CD4-positive, alpha-beta T cell (primary cell): ENCODE measurements at regions of chr20 and their contacts with region 1.

Region 1: GRCh38 chr20:36773597-36774390 is at the start of gene DSN1:
- DNase-seq: peak; percentile 95 to 99 (median 98)
- ATAC-seq: peak; percentile 78
- H3K4me3 ChIP-seq: peak within 1 kb of the TSS; percentile 86
- H3K4me3 Mint-ChIP-seq: peak within 1 kb of the TSS; percentile 97
- H3K27ac ChIP-seq: peak within 1 kb of the TSS; percentile 83 to 91
- H3K27ac Mint-ChIP-seq: peak within 1 kb of the TSS; percentile 94
- H3K4me1 ChIP-seq: peaks cover 21% of the 10 kb centered on the region
- H3K4me1 Mint-ChIP-seq: peaks cover 21% of the 10 kb centered on the region
- H3K27me3 ChIP-seq: no peaks in the 10 kb centered on the region
- H3K27me3 Mint-ChIP-seq: no peaks in the 10 kb centered on the region
- CTCF ChIP-seq: no peak
- total RNA-seq, gene DSN1: 10.5 to 14.3 TPM

Region 2: DNA sequence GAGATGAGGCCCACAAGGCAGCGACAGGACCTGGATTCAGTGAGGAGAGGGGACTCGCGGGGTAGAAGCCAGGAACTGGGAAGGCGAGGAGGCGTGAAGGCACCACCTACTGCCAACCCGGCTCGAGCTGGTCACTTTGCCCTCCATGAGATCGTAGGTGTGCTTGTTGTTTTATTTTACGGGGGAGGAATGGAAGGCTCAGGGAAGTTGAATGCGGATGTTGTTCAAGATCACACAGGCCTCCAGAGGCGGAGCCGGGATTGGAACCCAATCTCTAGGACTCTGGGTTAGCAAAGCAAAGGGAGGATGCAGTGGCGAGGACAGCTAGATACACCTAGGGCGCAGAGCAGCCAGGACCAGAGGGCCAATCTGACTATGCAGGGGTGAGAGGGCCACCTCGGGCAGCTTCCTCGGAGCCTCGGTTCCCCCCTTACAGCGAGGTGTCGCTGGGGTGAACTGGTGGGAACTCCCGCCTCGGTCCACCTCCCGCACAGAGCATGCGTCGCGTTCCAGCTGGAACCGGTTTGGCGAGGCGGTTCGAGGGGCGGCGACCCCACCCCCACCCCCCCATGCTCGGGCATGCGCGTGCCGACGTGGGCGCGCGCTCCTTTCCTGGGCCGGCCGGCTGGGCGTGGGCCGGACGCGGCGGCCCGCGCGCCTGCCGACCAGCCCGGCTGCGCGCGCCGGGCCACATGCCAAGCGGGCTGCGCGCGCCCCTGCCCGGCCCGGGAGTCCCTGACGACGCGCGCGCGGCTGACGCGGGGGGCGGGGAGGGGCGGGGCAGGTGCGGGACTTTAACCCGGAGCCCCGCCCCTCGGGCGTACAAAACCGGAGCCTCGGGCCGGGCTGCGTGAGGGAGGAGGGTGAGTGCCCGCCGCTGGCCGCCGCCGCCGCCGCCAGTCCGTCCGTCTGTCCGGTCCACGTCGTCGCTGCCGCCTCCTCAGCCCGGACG is 312.9 kb before region 1 on chr20:
- CTCF ChIA-PET with region 1: no interaction called
- POLR2A ChIA-PET with region 1: interaction called, 3 read pairs
- intact Hi-C with region 1: loop called (anchors 2 kb)
- DNase-seq: peak; percentile 79 to 98 (median 90)
- ATAC-seq: peak; percentile 75
- H3K4me3 ChIP-seq: peak overlapping the region; percentile 82
- H3K4me3 Mint-ChIP-seq: peak overlapping the region; percentile 89
- H3K27ac ChIP-seq: peak overlapping the region; percentile 76 to 93
- H3K27ac Mint-ChIP-seq: peak overlapping the region; percentile 84
- H3K4me1 ChIP-seq: peaks cover 50% of the 10 kb centered on the region
- H3K4me1 Mint-ChIP-seq: peaks cover 50% of the 10 kb centered on the region
- H3K27me3 ChIP-seq: no peaks in the 10 kb centered on the region
- H3K27me3 Mint-ChIP-seq: no peaks in the 10 kb centered on the region
- CTCF ChIP-seq: no peak

Region 3: DNA sequence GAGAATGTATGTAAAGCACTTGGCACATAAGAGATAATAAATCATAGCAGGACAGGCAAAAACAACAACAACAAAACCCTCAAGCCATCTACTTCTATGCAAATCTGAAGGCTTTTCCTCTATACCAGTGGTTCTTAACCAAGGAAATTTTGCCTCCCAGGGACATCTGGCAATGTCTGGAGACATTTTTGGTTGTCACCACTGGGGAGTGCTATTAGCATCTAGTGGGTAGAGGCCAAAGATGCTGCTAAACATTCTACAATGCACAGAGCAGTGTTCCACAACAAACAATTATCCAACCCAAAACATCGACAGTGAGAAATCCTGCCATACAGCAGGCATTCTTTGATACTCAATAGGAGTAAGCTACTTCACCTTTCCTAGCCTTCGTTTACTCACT is 56.1 kb before region 1 on chr20:
- CTCF ChIA-PET with region 1: no interaction called
- POLR2A ChIA-PET with region 1: no interaction called
- intact Hi-C with region 1: no loop called
- DNase-seq: peak in 4 of 14 experiments; percentile 35 to 55 (median 40)
- ATAC-seq: peak; percentile 54
- H3K4me3 ChIP-seq: no peak overlapping the region
- H3K4me3 Mint-ChIP-seq: no peak overlapping the region
- H3K27ac ChIP-seq: no peak overlapping the region
- H3K27ac Mint-ChIP-seq: no peak overlapping the region
- H3K4me1 ChIP-seq: no peaks in the 10 kb centered on the region
- H3K4me1 Mint-ChIP-seq: no peaks in the 10 kb centered on the region
- H3K27me3 ChIP-seq: no peaks in the 10 kb centered on the region
- H3K27me3 Mint-ChIP-seq: no peaks in the 10 kb centered on the region
- CTCF ChIP-seq: peak; percentile 50

Region 4: GRCh38 chr20:36736451-36737182 is 37.2 kb before region 1 on chr20:
- CTCF ChIA-PET with region 1: interaction called, 6 read pairs
- POLR2A ChIA-PET with region 1: interaction called, 16 read pairs
- intact Hi-C with region 1: no loop called
- DNase-seq: no peak
- ATAC-seq: no peak
- H3K4me3 ChIP-seq: no peak overlapping the region
- H3K4me3 Mint-ChIP-seq: no peak overlapping the region
- H3K27ac ChIP-seq: no peak overlapping the region
- H3K27ac Mint-ChIP-seq: no peak overlapping the region
- H3K4me1 ChIP-seq: peaks cover 28% of the 10 kb centered on the region
- H3K4me1 Mint-ChIP-seq: peaks cover 38% of the 10 kb centered on the region
- H3K27me3 ChIP-seq: no peaks in the 10 kb centered on the region
- H3K27me3 Mint-ChIP-seq: no peaks in the 10 kb centered on the region
- CTCF ChIP-seq: no peak

Region 5: GRCh38 chr20:36745927-36746659 is 27.7 kb before region 1 on chr20 and contains the start of gene NDRG3:
- CTCF ChIA-PET with region 1: interaction called, 3 read pairs
- POLR2A ChIA-PET with region 1: interaction called, 13 read pairs
- intact Hi-C with region 1: loop called (anchors 1 kb)
- DNase-seq: peak; percentile 84 to 97 (median 91)
- ATAC-seq: peak; percentile 98
- H3K4me3 ChIP-seq: peak within 1 kb of the TSS; percentile 92
- H3K4me3 Mint-ChIP-seq: peak within 1 kb of the TSS; percentile 90
- H3K27ac ChIP-seq: peak within 1 kb of the TSS in 1 of 2 donors; percentile 49
- H3K27ac Mint-ChIP-seq: peak within 1 kb of the TSS; percentile 89
- H3K4me1 ChIP-seq: peaks cover 22% of the 10 kb centered on the region
- H3K4me1 Mint-ChIP-seq: peaks cover 21% of the 10 kb centered on the region
- H3K27me3 ChIP-seq: no peaks in the 10 kb centered on the region
- H3K27me3 Mint-ChIP-seq: no peaks in the 10 kb centered on the region
- CTCF ChIP-seq: no peak
- total RNA-seq, gene NDRG3: 17.3 to 17.5 TPM

Region 6: GRCh38 chr20:36835453-36836198 is 61.8 kb after region 1 on chr20:
- CTCF ChIA-PET with region 1: interaction called, 3 read pairs
- POLR2A ChIA-PET with region 1: no interaction called
- intact Hi-C with region 1: loop called in 1 of 2 experiments (anchors 1 kb)
- DNase-seq: peak; percentile 69 to 91 (median 80)
- ATAC-seq: peak; percentile 99
- H3K4me3 ChIP-seq: peak overlapping the region; percentile 51
- H3K4me3 Mint-ChIP-seq: peak overlapping the region; percentile 82
- H3K27ac ChIP-seq: no peak overlapping the region
- H3K27ac Mint-ChIP-seq: peak overlapping the region; percentile 17
- H3K4me1 ChIP-seq: peaks cover 13% of the 10 kb centered on the region
- H3K4me1 Mint-ChIP-seq: peaks cover 8% of the 10 kb centered on the region
- H3K27me3 ChIP-seq: no peaks in the 10 kb centered on the region
- H3K27me3 Mint-ChIP-seq: no peaks in the 10 kb centered on the region
- CTCF ChIP-seq: no peak

Region 7: GRCh38 chr20:36861875-36862801 is 88.3 kb after region 1 on chr20:
- CTCF ChIA-PET with region 1: no interaction called
- POLR2A ChIA-PET with region 1: no interaction called
- intact Hi-C with region 1: loop called in 1 of 2 experiments (anchors 1 kb)
- DNase-seq: no peak
- ATAC-seq: no peak
- H3K4me3 ChIP-seq: no peak overlapping the region
- H3K4me3 Mint-ChIP-seq: peak overlapping the region; percentile 79
- H3K27ac ChIP-seq: no peak overlapping the region
- H3K27ac Mint-ChIP-seq: no peak overlapping the region
- H3K4me1 ChIP-seq: peaks cover 10% of the 10 kb centered on the region
- H3K4me1 Mint-ChIP-seq: peaks cover 9% of the 10 kb centered on the region
- H3K27me3 ChIP-seq: peaks cover 14 to 20% of the 10 kb centered on the region in 2 experiments
- H3K27me3 Mint-ChIP-seq: peaks cover 39% of the 10 kb centered on the region
- CTCF ChIP-seq: no peak

Region 8: DNA sequence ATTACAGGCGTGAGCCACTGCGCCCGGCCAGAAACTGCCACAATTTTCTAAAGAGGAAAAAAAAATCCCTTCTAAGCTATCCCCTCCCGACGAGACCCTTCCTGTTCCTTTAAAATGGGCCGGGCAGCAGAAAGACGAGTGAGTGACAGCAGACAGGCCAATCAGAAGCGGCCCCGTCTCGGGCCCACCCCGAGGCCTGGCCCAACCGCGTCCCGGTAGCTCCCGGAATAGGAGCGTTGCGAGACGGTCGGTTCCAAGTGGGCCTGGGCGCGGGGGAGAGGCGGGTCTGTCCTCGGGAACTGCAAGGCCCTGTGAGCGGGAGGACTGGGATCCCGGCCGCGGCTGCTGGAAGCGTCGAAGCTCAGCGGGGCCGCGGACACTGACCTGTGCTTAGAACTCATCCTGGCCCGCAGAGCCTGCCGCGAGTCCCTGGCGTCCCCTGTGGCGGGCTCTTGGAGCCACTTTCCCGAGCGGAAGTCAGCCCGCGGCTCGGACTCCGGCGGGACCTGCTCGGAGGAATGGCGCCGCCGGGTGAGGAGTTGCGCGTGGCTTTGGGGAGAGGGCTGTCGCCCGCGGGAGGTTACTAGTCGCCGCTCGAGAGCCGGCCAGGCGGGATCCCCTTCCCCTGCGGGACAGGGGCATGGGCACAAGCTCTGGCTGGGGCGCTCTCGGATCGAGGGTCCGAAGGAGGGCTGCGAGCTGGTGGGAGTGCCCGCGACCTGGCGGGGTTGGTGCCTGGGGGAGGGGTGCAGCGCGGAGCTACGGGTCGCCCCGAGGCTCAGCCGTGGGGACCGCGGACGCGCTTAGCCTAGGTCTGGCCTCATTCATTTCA is 405.3 kb after region 1 on chr20 and contains the starts of genes MROH8 and RPN2:
- CTCF ChIA-PET with region 1: no interaction called
- POLR2A ChIA-PET with region 1: no interaction called
- intact Hi-C with region 1: no loop called
- DNase-seq: peak; percentile 87 to 96 (median 93)
- ATAC-seq: peak; percentile 92
- H3K4me3 ChIP-seq: peak within 1 kb of the TSS; percentile 80
- H3K4me3 Mint-ChIP-seq: peak within 1 kb of the TSS; percentile 99
- H3K27ac ChIP-seq: peak within 1 kb of the TSS; percentile 84 to 90
- H3K27ac Mint-ChIP-seq: peak within 1 kb of the TSS; percentile 88
- H3K4me1 ChIP-seq: peaks cover 40% of the 10 kb centered on the region
- H3K4me1 Mint-ChIP-seq: peaks cover 46% of the 10 kb centered on the region
- H3K27me3 ChIP-seq: no peaks in the 10 kb centered on the region
- H3K27me3 Mint-ChIP-seq: no peaks in the 10 kb centered on the region
- CTCF ChIP-seq: no peak
- total RNA-seq, gene MROH8: 1.1 to 1.2 TPM
- total RNA-seq, gene RPN2: 62.8 to 65.8 TPM